ENCODE measurements at regions of chr17 and their contacts with region 1.

Region 1: GRCh38 chr17:19447085-19447583 is 36.1 kb downstream of the RNF112 start:
- DNase-seq: peak in 4 of 5 donors; percentile 78 to 92 (median 88)
- H3K4me3 ChIP-seq: no peak overlapping the region
- H3K27ac ChIP-seq: no peak overlapping the region
- H3K4me1 ChIP-seq: peaks cover 4 to 15% (median 12%) of the 10 kb centered on the region in 3 donors
- H3K27me3 ChIP-seq: no peaks in the 10 kb centered on the region
- CTCF ChIP-seq: peak; percentile 98

Region 2: DNA sequence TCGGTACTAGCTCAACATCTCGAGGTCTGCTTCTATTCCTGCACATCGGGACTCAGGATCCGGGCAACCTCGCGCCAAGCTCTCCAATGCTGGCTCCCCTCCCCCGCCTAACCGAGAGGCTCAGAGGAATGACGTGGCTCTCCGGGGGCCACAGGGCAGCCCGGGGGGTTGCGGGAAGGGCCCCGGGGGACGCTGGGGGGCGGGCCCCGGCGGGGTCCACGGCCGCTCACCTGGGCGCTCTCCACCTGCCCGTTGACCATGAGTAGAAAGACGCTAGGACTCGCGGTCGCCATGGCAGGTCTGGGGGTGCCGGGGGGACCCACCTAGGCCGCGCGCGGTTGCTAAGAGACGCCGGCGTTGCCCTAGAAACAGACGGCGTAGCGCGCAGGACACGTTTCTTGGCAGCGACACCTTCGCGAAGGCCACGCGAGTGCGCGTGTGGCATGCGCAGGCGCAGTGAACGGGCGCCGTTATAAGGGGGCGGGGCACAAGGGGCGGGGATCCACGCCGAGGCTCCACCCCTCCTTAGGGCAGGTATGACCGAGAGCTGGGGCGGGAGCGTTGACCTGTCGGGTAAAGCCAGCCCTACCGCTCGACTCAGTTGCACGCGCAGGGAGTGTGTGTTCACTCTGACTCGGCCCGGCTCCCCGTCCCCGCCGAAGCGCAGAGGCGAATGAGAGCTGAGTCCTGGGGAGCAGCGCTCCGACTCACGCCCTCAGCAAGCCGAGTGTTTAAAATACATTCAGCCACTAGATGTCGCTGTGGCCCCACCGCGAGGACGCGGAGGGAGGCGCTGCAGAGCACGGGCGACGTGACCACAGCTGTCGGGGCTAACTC is 84.6 kb before region 1 on chr17 and contains the start of gene B9D1:
- intact Hi-C with region 1: loop called (anchors 10 kb)
- DNase-seq: peak; percentile 95 to 98 (median 97)
- H3K4me3 ChIP-seq: peak within 1 kb of the TSS; percentile 60 to 91 (median 85)
- H3K27ac ChIP-seq: peak within 1 kb of the TSS; percentile 50 to 86
- H3K4me1 ChIP-seq: peaks cover 0 to 5% (median 0%) of the 10 kb centered on the region in 3 donors
- H3K27me3 ChIP-seq: no peaks in the 10 kb centered on the region
- CTCF ChIP-seq: peak; percentile 98
- total RNA-seq, gene B9D1: 32.1 TPM

Measured in kidney (tissue), 22 donors.